ENCODE measurements at regions of chr10 and their contacts with region 1.

Region 1: GRCh38 chr10:32357056-32357735 is 10.2 kb upstream of the EPC1 start:
- DNase-seq: no peak
- H3K4me3 ChIP-seq: no peak overlapping the region
- H3K27ac ChIP-seq: no peak overlapping the region
- H3K27me3 ChIP-seq: no peaks in the 10 kb centered on the region
- CTCF ChIP-seq: no peak

Region 2: DNA sequence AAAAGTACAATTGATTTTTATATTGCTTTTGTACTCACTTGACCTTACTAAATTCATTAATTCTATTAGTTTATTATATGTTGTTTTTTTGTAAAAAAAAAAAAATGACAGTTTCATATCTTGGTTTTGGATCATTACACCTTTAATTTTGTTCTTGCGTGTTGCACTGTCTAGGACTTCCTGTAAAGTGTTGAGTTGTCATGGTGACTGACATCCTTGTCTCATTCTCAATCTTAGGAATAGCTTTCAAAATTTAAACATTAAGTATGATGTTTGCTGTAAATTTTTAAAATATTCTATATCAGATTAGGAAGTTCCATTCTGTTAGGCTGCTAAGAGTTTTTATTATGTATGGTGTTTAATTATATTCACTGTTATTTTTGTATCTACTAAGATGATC is 567.6 kb before region 1 on chr10:
- CTCF ChIA-PET with region 1: no interaction called
- POLR2A ChIA-PET with region 1: no interaction called
- DNase-seq: no peak
- H3K4me3 ChIP-seq: no peak overlapping the region
- H3K27ac ChIP-seq: no peak overlapping the region
- H3K27me3 ChIP-seq: no peaks in the 10 kb centered on the region
- CTCF ChIP-seq: no peak

Region 3: GRCh38 chr10:31875608-31876007 is 481.6 kb before region 1 on chr10:
- CTCF ChIA-PET with region 1: interaction called, 12 read pairs
- POLR2A ChIA-PET with region 1: no interaction called
- DNase-seq: no peak
- H3K4me3 ChIP-seq: no peak overlapping the region
- H3K27ac ChIP-seq: no peak overlapping the region
- H3K27me3 ChIP-seq: no peaks in the 10 kb centered on the region
- CTCF ChIP-seq: no peak